Heart right ventricle (tissue), 16 donors: ENCODE measurements at regions of chr7 and their contacts with region 1.

Region 1: DNA sequence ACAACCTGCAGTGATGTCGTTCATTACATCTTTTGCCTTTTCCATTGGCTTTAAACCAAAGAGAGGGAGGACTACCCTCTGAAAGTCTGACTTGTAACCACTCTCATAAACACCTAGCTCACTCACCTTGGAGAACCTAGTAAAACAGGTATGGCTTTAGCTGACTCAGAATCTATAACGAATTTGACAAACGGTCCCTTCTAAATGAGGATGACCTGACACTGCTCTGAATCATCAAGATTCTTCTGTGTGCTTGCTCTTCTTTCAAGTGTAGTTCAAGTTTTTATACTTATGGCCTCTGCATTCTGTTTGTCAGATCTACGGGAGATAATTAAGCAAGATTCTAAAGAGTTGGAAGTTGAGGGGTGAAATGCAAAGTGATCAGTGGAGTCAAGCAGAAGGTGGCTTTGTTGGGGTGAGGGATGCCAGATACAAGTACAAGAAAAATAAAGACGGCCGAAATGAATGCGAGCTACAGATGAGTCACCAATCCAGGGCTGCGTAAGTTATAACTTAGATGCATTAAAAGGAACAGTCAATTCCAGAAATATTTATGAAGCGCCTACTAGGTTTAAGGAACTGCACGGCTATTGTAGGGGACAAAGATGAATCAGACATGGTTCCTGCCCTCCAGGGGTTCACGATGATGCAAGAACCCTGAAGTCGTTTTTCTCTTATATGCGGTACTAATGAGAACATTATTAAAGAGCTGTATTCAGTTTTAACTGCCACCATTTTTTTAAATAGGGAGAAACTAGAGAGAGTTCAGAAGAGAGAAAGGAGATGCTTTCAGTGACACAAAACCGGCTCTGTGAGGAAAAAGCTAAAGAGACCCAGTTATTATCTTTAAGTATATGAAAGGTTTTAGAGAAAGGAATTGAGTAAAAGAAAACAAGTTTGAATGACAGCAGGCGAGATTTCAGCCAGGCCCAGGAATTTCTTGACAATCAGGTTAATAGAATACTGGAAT is 6.5 kb downstream of the HIPK2 start:
- DNase-seq: no peak
- ATAC-seq: no peak
- H3K4me3 ChIP-seq: no peak overlapping the region
- H3K27ac ChIP-seq: peak overlapping the region in 1 of 10 donors; percentile 96
- H3K4me1 ChIP-seq: peaks cover 12 to 99% (median 80%) of the 10 kb centered on the region in 9 donors
- H3K27me3 ChIP-seq: no peaks in the 10 kb centered on the region
- CTCF ChIP-seq: no peak

Region 2: GRCh38 chr7:138388673-138389491 is 1382.4 kb before region 1 on chr7:
- intact Hi-C with region 1: no loop called
- DNase-seq: no peak
- ATAC-seq: no peak
- H3K4me3 ChIP-seq: no peak overlapping the region
- H3K27ac ChIP-seq: no peak overlapping the region
- H3K4me1 ChIP-seq: no peaks in the 10 kb centered on the region
- H3K27me3 ChIP-seq: no peaks in the 10 kb centered on the region
- CTCF ChIP-seq: no peak

Region 3: GRCh38 chr7:139745678-139746143 is 25.6 kb before region 1 on chr7:
- intact Hi-C with region 1: loop called in 2 of 10 experiments (anchors 2 to 5 kb)
- DNase-seq: peak; percentile 38 to 46
- ATAC-seq: peak; percentile 29 to 62 (median 53)
- H3K4me3 ChIP-seq: no peak overlapping the region
- H3K27ac ChIP-seq: peak overlapping the region; percentile 51 to 92 (median 74)
- H3K4me1 ChIP-seq: peaks cover 61 to 100% (median 99%) of the 10 kb centered on the region in 9 donors
- H3K27me3 ChIP-seq: no peaks in the 10 kb centered on the region
- CTCF ChIP-seq: peak in 1 of 9 donors; percentile 8

Region 4: GRCh38 chr7:139784648-139785047 is 13.4 kb after region 1 on chr7:
- intact Hi-C with region 1: no loop called
- DNase-seq: no peak
- ATAC-seq: no peak
- H3K4me3 ChIP-seq: no peak overlapping the region
- H3K27ac ChIP-seq: no peak overlapping the region
- H3K4me1 ChIP-seq: peaks cover 0 to 6% (median 0%) of the 10 kb centered on the region in 9 donors
- H3K27me3 ChIP-seq: peaks cover 0 to 9% (median 0%) of the 10 kb centered on the region in 7 donors
- CTCF ChIP-seq: no peak

Region 5: DNA sequence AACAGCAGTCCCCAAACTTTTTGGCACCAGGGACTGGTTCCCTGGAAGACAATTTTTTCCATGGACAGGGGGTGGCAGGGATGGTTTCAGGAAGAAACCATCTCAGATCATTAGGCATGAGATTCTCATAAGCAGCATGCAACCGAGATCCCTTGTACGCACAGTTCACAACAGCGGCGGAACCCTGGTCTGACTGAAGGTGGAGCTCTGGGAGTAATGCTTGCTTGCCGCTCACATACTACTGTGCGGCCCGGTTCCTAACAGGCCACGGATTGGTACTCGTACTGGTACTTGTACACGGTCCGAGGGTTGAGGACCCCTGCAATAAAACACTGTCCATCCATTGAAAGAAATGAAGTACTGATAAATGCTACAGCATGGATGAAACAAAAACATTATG is 675.2 kb after region 1 on chr7:
- intact Hi-C with region 1: no loop called
- DNase-seq: no peak
- ATAC-seq: no peak
- H3K4me3 ChIP-seq: no peak overlapping the region
- H3K27ac ChIP-seq: no peak overlapping the region
- H3K4me1 ChIP-seq: peaks cover 0 to 17% (median 7%) of the 10 kb centered on the region in 9 donors
- H3K27me3 ChIP-seq: no peaks in the 10 kb centered on the region
- CTCF ChIP-seq: no peak